Activated CD4-positive, alpha-beta memory T cell treated with anti-CD3 and anti-CD28 coated beads, Interleukin-2, amount 10 ng/mL, durations not matched to agents 7 days and 5 days (primary cell): ENCODE measurements at regions of chr1 and their contacts with region 1.

Region 1: DNA sequence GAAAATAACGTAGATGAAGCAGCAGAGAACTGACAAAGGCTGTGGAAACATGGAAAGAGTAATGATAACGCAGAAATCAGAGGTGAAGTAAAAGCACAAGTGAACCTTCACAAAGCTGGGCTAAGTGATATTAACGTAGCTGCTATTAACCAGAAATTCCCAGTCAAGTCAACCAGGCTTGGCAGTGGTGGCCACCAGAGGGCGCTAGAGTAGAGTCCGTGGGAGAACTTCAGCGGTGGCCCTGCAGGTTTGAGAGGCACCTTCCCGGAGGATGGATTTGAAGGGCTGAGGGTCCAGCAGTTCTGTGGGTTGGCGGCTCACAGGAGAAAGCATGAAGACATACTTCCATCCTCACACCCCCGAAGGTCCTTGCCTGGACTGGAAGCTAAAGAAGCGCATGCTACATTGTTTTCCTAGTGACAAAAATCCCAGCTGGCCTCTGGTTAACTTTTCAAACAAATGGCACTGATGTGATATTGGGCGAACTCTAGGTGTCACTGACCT is 81.7 kb upstream of the ZNF648 start:
- DNase-seq: peak; percentile 87
- H3K4me3 Mint-ChIP-seq: no peak overlapping the region
- H3K27ac Mint-ChIP-seq: no peak overlapping the region
- H3K4me1 Mint-ChIP-seq: peaks cover 28% of the 10 kb centered on the region
- H3K27me3 Mint-ChIP-seq: peaks cover 8% of the 10 kb centered on the region

Region 2: GRCh38 chr1:182129398-182129797 is 13.8 kb before region 1 on chr1:
- CTCF ChIA-PET with region 1: interaction called, 17 read pairs
- POLR2A ChIA-PET with region 1: no interaction called
- DNase-seq: no peak
- H3K4me3 Mint-ChIP-seq: no peak overlapping the region
- H3K27ac Mint-ChIP-seq: no peak overlapping the region
- H3K4me1 Mint-ChIP-seq: no peaks in the 10 kb centered on the region
- H3K27me3 Mint-ChIP-seq: peaks cover 3% of the 10 kb centered on the region

Region 3: DNA sequence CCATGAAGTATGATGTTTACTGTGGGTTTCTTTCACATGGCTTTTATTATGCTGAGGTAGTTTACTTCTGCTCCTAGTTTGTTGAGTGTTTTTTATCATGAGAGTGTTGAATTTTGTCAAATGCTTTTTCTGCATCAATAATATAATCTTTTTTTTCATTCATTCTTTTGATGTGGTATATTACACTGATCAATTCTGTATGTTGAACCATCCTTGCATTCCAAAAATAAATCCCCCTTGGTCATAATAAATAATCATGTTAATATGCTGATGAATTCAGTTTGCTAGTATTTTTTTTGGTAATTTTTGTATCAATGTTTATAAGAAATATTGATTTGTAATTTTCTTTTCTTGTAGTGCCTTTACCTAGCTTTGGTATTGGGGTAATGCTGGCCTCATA is 16.2 kb after region 1 on chr1:
- CTCF ChIA-PET with region 1: interaction called, 18 read pairs
- POLR2A ChIA-PET with region 1: interaction called, 3 read pairs
- DNase-seq: no peak
- H3K4me3 Mint-ChIP-seq: no peak overlapping the region
- H3K27ac Mint-ChIP-seq: no peak overlapping the region
- H3K4me1 Mint-ChIP-seq: no peaks in the 10 kb centered on the region
- H3K27me3 Mint-ChIP-seq: peaks cover 6% of the 10 kb centered on the region

Region 4: DNA sequence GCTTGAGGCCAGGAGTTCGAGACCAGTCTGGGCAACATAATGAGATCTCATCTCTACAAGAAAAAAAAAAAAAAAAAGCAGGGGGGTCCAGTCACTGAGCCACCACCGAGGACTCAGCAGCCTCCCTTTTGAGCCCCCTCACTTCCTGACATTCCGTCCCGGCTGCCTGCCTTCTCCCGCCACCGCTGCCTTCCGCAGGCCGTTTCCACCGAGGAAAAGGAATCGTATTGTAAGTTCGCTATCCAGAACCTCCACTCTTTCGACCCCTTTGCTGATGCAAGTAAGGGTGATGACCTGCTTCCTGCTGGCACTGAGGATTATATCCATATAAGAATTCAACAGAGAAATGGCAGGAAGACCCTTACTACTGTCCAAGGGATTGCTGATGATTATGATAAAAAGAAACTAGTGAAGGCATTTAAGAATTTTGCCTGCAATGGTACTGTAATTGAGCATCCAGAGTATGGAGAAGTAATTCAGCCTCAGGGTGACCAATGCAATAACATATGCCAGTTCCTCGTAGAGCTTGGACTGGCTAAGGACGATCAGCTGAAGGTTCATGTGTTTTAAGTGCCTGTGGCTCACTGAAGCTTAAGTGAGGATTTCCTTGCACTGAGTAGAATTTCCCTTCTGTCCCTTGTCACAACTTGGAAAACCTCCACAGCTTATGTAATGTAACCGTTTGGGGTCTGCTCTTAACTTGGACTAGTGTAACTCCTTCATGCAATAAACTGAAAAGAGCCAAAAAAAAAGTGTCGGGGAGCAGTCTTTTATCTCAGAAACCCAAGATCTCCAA is 192.8 kb after region 1 on chr1:
- CTCF ChIA-PET with region 1: interaction called, 11 read pairs
- POLR2A ChIA-PET with region 1: no interaction called
- DNase-seq: no peak
- H3K4me3 Mint-ChIP-seq: no peak overlapping the region
- H3K27ac Mint-ChIP-seq: no peak overlapping the region
- H3K4me1 Mint-ChIP-seq: no peaks in the 10 kb centered on the region
- H3K27me3 Mint-ChIP-seq: peaks cover 4% of the 10 kb centered on the region

Region 5: DNA sequence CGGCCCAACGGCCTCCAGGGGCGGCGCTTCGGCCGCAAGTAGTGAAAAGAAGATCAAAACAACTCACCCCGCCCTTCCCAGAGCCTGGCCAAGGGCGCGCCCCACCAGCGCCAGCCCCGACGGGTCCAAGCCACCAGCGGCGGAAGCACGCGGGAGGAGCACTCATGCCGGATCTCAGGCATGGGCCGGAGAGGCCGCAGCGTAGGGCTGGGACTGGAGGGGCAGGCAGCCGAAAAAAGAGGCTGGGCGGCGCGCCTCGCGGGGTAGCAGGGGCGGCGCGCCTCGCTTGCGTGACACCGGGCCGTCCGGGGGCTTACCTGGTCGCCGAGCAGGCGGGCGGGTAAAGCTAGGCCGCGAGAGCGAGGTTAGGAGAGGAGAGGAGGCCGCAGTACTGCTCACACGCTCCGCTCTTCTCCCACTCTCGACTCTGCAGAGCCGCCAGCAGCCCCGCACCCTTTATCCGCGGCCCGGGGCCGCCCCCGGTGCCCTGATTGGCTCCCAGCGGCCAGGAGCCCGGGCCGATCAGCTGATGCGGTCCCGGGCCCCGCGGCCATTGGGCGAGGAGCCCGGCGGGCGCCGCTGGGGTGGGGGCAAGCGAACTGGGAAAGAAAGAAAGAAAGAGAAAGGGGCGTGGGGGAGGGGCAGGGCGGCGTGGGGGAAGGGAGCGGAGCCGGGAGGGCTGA is 248.3 kb after region 1 on chr1 and contains the start of gene GLUL:
- CTCF ChIA-PET with region 1: interaction called, 202 read pairs
- POLR2A ChIA-PET with region 1: interaction called, 12 read pairs
- DNase-seq: peak; percentile 81
- H3K4me3 Mint-ChIP-seq: peak within 1 kb of the TSS; percentile 96
- H3K27ac Mint-ChIP-seq: peak within 1 kb of the TSS; percentile 83
- H3K4me1 Mint-ChIP-seq: peaks cover 36% of the 10 kb centered on the region
- H3K27me3 Mint-ChIP-seq: peaks cover 30% of the 10 kb centered on the region
- total RNA-seq, gene GLUL: 227 to 228 TPM

Region 6: GRCh38 chr1:182397771-182398393 is 254.7 kb after region 1 on chr1:
- CTCF ChIA-PET with region 1: interaction called, 202 read pairs
- POLR2A ChIA-PET with region 1: interaction called, 12 read pairs
- DNase-seq: no peak
- H3K4me3 Mint-ChIP-seq: no peak overlapping the region
- H3K27ac Mint-ChIP-seq: no peak overlapping the region
- H3K4me1 Mint-ChIP-seq: peaks cover 7% of the 10 kb centered on the region
- H3K27me3 Mint-ChIP-seq: peaks cover 17% of the 10 kb centered on the region